ENCODE measurements at regions of chr19 and their contacts with region 1.

Region 1: DNA sequence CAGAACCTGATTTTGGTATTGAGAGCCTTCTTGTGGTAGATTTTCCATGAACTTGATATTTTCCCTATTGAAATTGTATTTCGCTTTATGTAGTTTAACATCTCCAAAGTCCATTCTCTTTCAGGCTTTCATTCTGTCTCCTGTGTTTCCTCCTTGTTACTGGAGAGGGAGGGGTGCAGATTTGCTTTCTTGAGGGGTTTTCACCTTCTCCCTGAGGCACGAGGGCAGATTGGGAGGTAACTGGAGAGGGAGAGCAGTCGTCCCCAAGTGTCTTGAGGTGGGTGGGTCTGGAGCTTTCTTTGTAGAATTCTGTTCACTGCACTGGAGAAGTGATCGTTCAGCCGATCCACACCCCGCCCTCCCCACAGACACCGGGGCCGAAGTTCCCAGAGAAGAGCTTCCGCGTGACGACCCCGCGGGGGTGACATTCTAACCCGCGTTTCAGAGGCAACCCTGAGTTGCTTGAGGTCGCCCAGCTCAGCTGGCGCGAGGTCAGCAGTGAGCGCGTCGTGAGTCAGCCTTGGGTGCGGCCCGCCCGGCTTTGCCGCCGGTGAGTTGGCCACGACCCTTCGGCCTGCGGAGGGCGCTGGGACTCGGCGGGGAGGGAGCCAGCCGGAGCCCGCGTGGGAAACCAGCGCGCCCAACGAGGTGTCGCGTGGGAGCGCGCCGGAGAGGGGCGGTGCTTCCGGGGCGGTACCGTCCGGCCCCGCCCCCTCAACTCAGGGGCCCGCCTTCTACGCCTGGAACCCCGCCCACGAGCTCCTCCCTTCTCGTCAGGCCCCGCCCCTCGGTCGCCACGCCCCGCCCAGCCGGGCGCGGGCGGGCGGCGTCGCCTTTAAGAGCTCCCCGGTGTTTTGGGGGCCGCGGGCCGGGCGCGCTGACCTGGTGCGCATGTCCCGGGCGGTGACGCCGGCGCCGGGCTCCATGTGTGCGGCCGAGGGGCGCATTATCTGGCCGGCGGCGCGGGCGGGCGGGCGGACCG is at the start of gene GATAD2A:
- DNase-seq: peak; percentile 85 to 99 (median 90)
- ATAC-seq: peak; percentile 96
- H3K4me3 ChIP-seq: peak within 1 kb of the TSS; percentile 65
- H3K4me3 Mint-ChIP-seq: peak within 1 kb of the TSS; percentile 89 to 97 (median 94)
- H3K27ac ChIP-seq: peak within 1 kb of the TSS; percentile 86
- H3K27ac Mint-ChIP-seq: peak within 1 kb of the TSS; percentile 86 to 98 (median 92)
- H3K4me1 ChIP-seq: peaks cover 26 to 38% of the 10 kb centered on the region in 2 donors
- H3K4me1 Mint-ChIP-seq: peaks cover 37 to 70% (median 66%) of the 10 kb centered on the region in 7 donors
- H3K27me3 ChIP-seq: no peaks in the 10 kb centered on the region
- H3K27me3 Mint-ChIP-seq: no peaks in the 10 kb centered on the region
- total RNA-seq, gene GATAD2A: 97.9 to 123 (median 116) TPM

Region 2: DNA sequence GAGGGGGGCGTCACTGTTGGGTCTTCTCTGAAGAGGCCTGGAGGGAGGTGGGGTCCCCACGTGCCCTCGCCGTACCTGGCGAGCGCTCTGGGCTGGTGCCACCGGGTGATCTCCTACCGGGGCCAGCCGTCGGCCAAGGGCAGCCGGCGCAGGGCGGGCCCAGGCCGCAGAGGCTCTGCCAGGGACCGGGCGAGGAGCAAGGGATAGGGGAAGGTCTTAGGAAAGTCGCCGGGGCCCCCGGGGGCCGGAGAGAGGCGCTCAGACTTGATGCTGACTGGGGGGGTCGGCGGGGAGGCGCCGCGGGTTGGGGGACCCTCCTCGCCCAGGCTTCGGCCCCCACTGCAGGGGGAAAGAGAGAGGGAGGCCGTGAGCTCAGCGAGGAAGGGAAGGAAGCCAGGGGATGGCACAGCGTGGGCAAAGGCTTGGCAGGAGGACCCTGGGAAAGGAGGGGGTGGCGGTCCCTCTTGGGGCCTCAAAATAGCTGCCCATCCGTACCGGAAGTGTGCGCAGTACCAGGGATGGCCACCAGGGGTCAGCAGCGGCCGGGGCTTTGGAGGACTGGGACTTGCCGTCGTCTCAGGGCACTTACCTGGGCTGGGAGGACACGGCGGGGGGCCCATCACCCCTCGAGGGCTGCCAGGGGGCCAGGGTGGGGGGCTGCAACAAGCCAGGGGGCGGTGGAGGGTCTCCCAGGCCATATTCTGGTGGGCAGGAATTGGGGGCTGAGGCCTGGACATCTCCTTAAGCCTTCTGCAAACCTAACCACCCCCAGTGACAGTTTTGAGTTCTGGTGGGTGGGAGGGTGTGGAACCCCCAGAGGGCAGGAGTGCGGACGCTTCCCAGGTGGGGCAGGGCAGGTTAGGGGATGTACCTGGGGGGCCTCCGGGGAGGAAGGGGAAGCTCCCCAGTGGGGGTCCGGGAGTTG is 259.2 kb before region 1 on chr19:
- CTCF ChIA-PET with region 1: interaction called, 3 read pairs
- POLR2A ChIA-PET with region 1: no interaction called
- intact Hi-C with region 1: loop called in 1 of 2 experiments (anchors 5 kb)
- DNase-seq: peak; percentile 68 to 93 (median 80)
- ATAC-seq: peak; percentile 96
- H3K4me3 ChIP-seq: no peak overlapping the region
- H3K4me3 Mint-ChIP-seq: no peak overlapping the region
- H3K27ac ChIP-seq: no peak overlapping the region
- H3K27ac Mint-ChIP-seq: no peak overlapping the region
- H3K4me1 ChIP-seq: no peaks in the 10 kb centered on the region
- H3K4me1 Mint-ChIP-seq: no peaks in the 10 kb centered on the region
- H3K27me3 ChIP-seq: no peaks in the 10 kb centered on the region
- H3K27me3 Mint-ChIP-seq: no peaks in the 10 kb centered on the region

Region 3: GRCh38 chr19:19366612-19367396 is 38.4 kb before region 1 on chr19:
- CTCF ChIA-PET with region 1: interaction called, 10 read pairs
- POLR2A ChIA-PET with region 1: interaction called, 30 read pairs
- intact Hi-C with region 1: loop called (anchors 1 kb)
- DNase-seq: peak; percentile 49 to 76 (median 70)
- ATAC-seq: peak; percentile 83
- H3K4me3 ChIP-seq: no peak overlapping the region
- H3K4me3 Mint-ChIP-seq: peak overlapping the region; percentile 21 to 66 (median 54)
- H3K27ac ChIP-seq: peak overlapping the region; percentile 22
- H3K27ac Mint-ChIP-seq: peak overlapping the region; percentile 37 to 91 (median 81)
- H3K4me1 ChIP-seq: peaks cover 14 to 15% of the 10 kb centered on the region in 2 donors
- H3K4me1 Mint-ChIP-seq: peaks cover 11 to 26% (median 19%) of the 10 kb centered on the region in 7 donors
- H3K27me3 ChIP-seq: no peaks in the 10 kb centered on the region
- H3K27me3 Mint-ChIP-seq: no peaks in the 10 kb centered on the region

Region 4: GRCh38 chr19:19459707-19460251 is 54.6 kb after region 1 on chr19:
- CTCF ChIA-PET with region 1: interaction called, 4 read pairs
- POLR2A ChIA-PET with region 1: interaction called, 17 read pairs
- intact Hi-C with region 1: loop called (anchors 1 kb)
- DNase-seq: peak in 8 of 9 donors; percentile 49 to 75 (median 61)
- ATAC-seq: peak; percentile 72
- H3K4me3 ChIP-seq: peak overlapping the region; percentile 55
- H3K4me3 Mint-ChIP-seq: peak overlapping the region; percentile 85 to 92 (median 91)
- H3K27ac ChIP-seq: peak overlapping the region; percentile 82
- H3K27ac Mint-ChIP-seq: peak overlapping the region; percentile 94 to 99 (median 98)
- H3K4me1 ChIP-seq: peaks cover 82% of the 10 kb centered on the region in 2 donors
- H3K4me1 Mint-ChIP-seq: peaks cover 63 to 84% (median 72%) of the 10 kb centered on the region in 7 donors
- H3K27me3 ChIP-seq: no peaks in the 10 kb centered on the region
- H3K27me3 Mint-ChIP-seq: no peaks in the 10 kb centered on the region

Region 5: GRCh38 chr19:19606021-19606420 is 200.9 kb after region 1 on chr19:
- CTCF ChIA-PET with region 1: no interaction called
- POLR2A ChIA-PET with region 1: no interaction called
- intact Hi-C with region 1: loop called in 1 of 2 experiments (anchors 10 kb)
- DNase-seq: peak in 7 of 9 donors; percentile 33 to 83 (median 61)
- ATAC-seq: peak; percentile 83
- H3K4me3 ChIP-seq: no peak overlapping the region
- H3K4me3 Mint-ChIP-seq: peak overlapping the region; percentile 42 to 76 (median 71)
- H3K27ac ChIP-seq: peak overlapping the region; percentile 46
- H3K27ac Mint-ChIP-seq: peak overlapping the region; percentile 66 to 96 (median 91)
- H3K4me1 ChIP-seq: peaks cover 42 to 54% of the 10 kb centered on the region in 2 donors
- H3K4me1 Mint-ChIP-seq: peaks cover 29 to 66% (median 55%) of the 10 kb centered on the region in 7 donors
- H3K27me3 ChIP-seq: no peaks in the 10 kb centered on the region
- H3K27me3 Mint-ChIP-seq: no peaks in the 10 kb centered on the region

Region 6: DNA sequence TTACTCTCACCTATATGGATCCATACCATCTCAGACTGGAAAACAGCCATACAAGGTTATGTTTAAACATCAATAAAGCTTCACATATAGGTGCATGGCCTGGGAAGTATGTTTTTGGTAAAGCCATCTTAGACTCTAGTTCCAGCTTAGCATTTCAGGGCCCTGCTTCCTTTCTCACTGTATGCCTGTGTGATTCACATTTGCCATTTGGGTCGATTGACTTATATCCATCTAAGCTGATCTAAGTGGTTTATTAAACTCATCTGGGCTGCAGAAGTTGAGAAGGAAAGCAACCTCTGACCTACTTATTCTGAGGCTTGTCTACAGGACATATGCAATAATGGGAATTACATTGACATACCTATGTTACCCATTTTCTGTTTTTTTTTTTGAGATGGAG is 382.8 kb after region 1 on chr19:
- CTCF ChIA-PET with region 1: no interaction called
- POLR2A ChIA-PET with region 1: no interaction called
- intact Hi-C with region 1: no loop called
- DNase-seq: no peak
- ATAC-seq: no peak
- H3K4me3 ChIP-seq: no peak overlapping the region
- H3K4me3 Mint-ChIP-seq: no peak overlapping the region
- H3K27ac ChIP-seq: no peak overlapping the region
- H3K27ac Mint-ChIP-seq: no peak overlapping the region
- H3K4me1 ChIP-seq: no peaks in the 10 kb centered on the region
- H3K4me1 Mint-ChIP-seq: peaks cover 0 to 25% (median 23%) of the 10 kb centered on the region in 7 donors
- H3K27me3 ChIP-seq: no peaks in the 10 kb centered on the region
- H3K27me3 Mint-ChIP-seq: no peaks in the 10 kb centered on the region

Measured in naive thymus-derived CD4-positive, alpha-beta T cell (primary cell).